Stomach (tissue), 19 donors: ENCODE measurements at regions of chr20 and their contacts with region 1.

Region 1: GRCh38 chr20:37270576-37271420 is 9.2 kb upstream of the GHRH start:
- DNase-seq: no peak
- H3K4me3 ChIP-seq: no peak overlapping the region
- H3K27ac ChIP-seq: peak overlapping the region in 2 of 5 donors; percentile 50 to 65
- H3K4me1 ChIP-seq: peaks cover 0 to 17% (median 3%) of the 10 kb centered on the region in 4 donors
- H3K27me3 ChIP-seq: no peaks in the 10 kb centered on the region
- CTCF ChIP-seq: no peak
- EP300 ChIP-seq: no peak
- POLR2A ChIP-seq: no peak

Region 2: DNA sequence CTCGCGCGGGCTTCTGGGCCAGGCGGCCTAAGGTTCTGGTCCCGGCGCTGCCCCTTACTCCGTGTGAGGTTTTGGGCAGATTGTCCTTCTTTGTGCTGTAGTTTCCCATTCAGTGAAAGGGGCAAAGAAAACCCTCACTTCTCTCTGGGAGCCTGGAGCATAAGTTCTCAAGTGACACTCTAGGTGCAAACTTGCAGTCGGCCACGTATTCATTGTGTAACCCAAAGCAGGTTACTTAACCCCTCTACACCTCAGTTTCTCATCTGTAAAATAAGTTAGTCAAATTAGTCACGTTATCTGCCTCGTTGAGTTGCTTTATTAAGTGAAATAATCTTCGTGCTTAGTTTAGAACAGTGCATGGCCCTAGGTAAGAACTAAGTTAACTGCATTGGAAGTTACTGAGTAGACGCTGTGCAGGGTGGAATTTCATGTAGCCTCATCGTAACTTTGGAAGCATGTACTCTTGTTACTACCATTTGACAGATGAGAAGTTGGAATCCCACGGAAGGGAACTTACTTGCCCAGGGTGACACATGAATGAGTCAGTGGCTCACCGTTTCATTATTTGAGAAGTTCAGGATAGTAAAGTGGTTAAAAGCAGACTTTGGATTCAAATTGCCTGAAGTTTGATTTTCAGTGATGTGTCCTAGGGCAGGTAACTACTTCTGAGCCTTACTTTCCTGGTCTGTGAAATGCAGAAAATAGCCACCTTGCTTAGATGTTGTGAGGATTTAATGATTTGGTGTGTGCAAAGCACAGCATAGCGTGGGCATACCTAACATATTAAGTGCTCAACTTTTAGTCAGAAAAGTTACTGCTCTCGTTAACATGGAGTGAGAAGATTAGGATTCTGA is 90.9 kb before region 1 on chr20:
- intact Hi-C with region 1: no loop called
- DNase-seq: no peak
- H3K4me3 ChIP-seq: peak overlapping the region; percentile 85 to 97 (median 91)
- H3K27ac ChIP-seq: peak overlapping the region; percentile 95 to 98 (median 98)
- H3K4me1 ChIP-seq: peaks cover 27 to 59% (median 45%) of the 10 kb centered on the region in 4 donors
- H3K27me3 ChIP-seq: no peaks in the 10 kb centered on the region
- CTCF ChIP-seq: no peak
- EP300 ChIP-seq: no peak
- POLR2A ChIP-seq: no peak

Region 3: DNA sequence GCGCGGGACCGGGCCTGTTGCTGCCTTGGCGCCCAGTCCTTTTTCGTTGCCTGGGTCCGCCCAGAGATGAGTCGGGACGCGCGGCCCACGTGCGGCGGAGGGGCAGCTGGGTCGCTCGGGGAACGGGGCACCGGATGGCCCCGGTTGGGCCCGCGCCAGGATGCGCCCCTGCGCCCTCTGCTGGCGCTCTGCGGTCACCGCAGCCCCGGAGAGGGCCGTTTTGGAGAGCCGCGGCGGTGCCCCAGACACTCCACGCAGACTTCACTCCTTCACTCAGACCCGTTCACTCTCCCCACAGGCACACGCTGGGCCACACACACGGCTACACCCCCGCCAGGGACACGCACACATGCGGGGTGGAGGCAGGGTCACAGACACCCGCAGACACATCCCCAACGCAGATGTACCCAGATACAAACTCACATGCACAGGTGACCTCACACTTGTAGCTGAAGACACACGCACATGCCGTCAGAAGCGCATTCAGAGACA is 113.9 kb after region 1 on chr20:
- intact Hi-C with region 1: loop called (anchors 5 kb)
- DNase-seq: peak; percentile 69 to 86
- H3K4me3 ChIP-seq: peak overlapping the region; percentile 41 to 50 (median 48)
- H3K27ac ChIP-seq: peak overlapping the region in 2 of 5 donors; percentile 63 to 79
- H3K4me1 ChIP-seq: peaks cover 27 to 58% (median 41%) of the 10 kb centered on the region in 4 donors
- H3K27me3 ChIP-seq: no peaks in the 10 kb centered on the region
- CTCF ChIP-seq: peak in 5 of 7 experiments; percentile 81 to 95 (median 90)
- EP300 ChIP-seq: no peak
- POLR2A ChIP-seq: no peak

Region 4: GRCh38 chr20:37396416-37397075 is 125.7 kb after region 1 on chr20:
- intact Hi-C with region 1: no loop called
- DNase-seq: peak in 1 of 2 donors; percentile 89
- H3K4me3 ChIP-seq: no peak overlapping the region
- H3K27ac ChIP-seq: no peak overlapping the region
- H3K4me1 ChIP-seq: peaks cover 0 to 24% (median 17%) of the 10 kb centered on the region in 4 donors
- H3K27me3 ChIP-seq: no peaks in the 10 kb centered on the region
- CTCF ChIP-seq: no peak
- EP300 ChIP-seq: no peak
- POLR2A ChIP-seq: no peak

Region 5: GRCh38 chr20:37407573-37408002 is 136.8 kb after region 1 on chr20:
- intact Hi-C with region 1: no loop called
- DNase-seq: peak in 1 of 2 donors; percentile 73
- H3K4me3 ChIP-seq: no peak overlapping the region
- H3K27ac ChIP-seq: peak overlapping the region in 1 of 5 donors; percentile 34
- H3K4me1 ChIP-seq: peaks cover 17 to 48% (median 37%) of the 10 kb centered on the region in 4 donors
- H3K27me3 ChIP-seq: peaks cover 0 to 47% (median 25%) of the 10 kb centered on the region in 3 donors
- CTCF ChIP-seq: no peak
- EP300 ChIP-seq: no peak
- POLR2A ChIP-seq: no peak

Region 6: GRCh38 chr20:37602634-37603033 is 331.8 kb after region 1 on chr20:
- intact Hi-C with region 1: no loop called
- DNase-seq: no peak
- H3K4me3 ChIP-seq: no peak overlapping the region
- H3K27ac ChIP-seq: no peak overlapping the region
- H3K4me1 ChIP-seq: peaks cover 0 to 8% (median 3%) of the 10 kb centered on the region in 4 donors
- H3K27me3 ChIP-seq: peaks cover 4 to 38% (median 12%) of the 10 kb centered on the region in 3 donors
- CTCF ChIP-seq: no peak
- EP300 ChIP-seq: no peak
- POLR2A ChIP-seq: no peak